Heart left ventricle (tissue), 16 donors: ENCODE measurements at regions of chr15 and their contacts with region 1.

Region 1: GRCh38 chr15:98873441-98874201 is 134.0 kb downstream of the PGPEP1L start:
- DNase-seq: no peak
- ATAC-seq: peak in 1 of 4 donors; percentile 27
- H3K4me3 ChIP-seq: no peak overlapping the region
- H3K27ac ChIP-seq: peak overlapping the region in 9 of 12 donors; percentile 18 to 81 (median 55)
- H3K4me1 ChIP-seq: peaks cover 0 to 89% (median 58%) of the 10 kb centered on the region in 12 donors
- H3K27me3 ChIP-seq: no peaks in the 10 kb centered on the region
- CTCF ChIP-seq: no peak
- POLR2A ChIP-seq: no peak

Region 2: DNA sequence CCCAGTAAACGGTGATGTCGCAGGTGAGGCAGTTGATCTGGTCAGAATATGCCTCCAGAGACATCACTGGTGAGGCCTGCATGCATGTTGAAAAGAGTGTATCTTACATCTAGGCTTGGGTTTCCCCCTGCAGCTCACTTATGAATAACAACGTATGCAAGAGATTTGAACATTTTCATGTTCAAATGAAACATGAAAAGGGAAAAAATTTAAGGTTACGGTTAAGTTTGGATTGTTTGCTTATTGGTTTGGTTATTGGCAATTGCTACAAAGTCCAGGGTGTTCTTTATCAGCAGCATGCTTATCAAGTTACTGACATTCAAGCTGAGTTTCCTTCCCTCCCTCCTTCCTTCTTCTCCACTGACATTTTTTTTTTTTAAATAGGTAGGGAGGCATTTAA is 102.1 kb before region 1 on chr15:
- intact Hi-C with region 1: loop called in 2 of 10 experiments (anchors 5 kb)
- DNase-seq: no peak
- ATAC-seq: no peak
- H3K4me3 ChIP-seq: no peak overlapping the region
- H3K27ac ChIP-seq: peak overlapping the region in 1 of 12 donors; percentile 25
- H3K4me1 ChIP-seq: peaks cover 0 to 76% (median 33%) of the 10 kb centered on the region in 12 donors
- H3K27me3 ChIP-seq: no peaks in the 10 kb centered on the region
- CTCF ChIP-seq: peak in 1 of 12 donors; percentile 17
- POLR2A ChIP-seq: no peak

Region 3: GRCh38 chr15:98937413-98938104 is 63.9 kb after region 1 on chr15:
- intact Hi-C with region 1: loop called in 1 of 10 experiments (anchors 10 kb)
- DNase-seq: no peak
- ATAC-seq: no peak
- H3K4me3 ChIP-seq: no peak overlapping the region
- H3K27ac ChIP-seq: no peak overlapping the region
- H3K4me1 ChIP-seq: peaks cover 0 to 3% (median 0%) of the 10 kb centered on the region in 12 donors
- H3K27me3 ChIP-seq: no peaks in the 10 kb centered on the region
- CTCF ChIP-seq: no peak
- POLR2A ChIP-seq: no peak